AG04449 (cell line): ENCODE measurements at regions of chr1 and their contacts with region 1.

Region 1: DNA sequence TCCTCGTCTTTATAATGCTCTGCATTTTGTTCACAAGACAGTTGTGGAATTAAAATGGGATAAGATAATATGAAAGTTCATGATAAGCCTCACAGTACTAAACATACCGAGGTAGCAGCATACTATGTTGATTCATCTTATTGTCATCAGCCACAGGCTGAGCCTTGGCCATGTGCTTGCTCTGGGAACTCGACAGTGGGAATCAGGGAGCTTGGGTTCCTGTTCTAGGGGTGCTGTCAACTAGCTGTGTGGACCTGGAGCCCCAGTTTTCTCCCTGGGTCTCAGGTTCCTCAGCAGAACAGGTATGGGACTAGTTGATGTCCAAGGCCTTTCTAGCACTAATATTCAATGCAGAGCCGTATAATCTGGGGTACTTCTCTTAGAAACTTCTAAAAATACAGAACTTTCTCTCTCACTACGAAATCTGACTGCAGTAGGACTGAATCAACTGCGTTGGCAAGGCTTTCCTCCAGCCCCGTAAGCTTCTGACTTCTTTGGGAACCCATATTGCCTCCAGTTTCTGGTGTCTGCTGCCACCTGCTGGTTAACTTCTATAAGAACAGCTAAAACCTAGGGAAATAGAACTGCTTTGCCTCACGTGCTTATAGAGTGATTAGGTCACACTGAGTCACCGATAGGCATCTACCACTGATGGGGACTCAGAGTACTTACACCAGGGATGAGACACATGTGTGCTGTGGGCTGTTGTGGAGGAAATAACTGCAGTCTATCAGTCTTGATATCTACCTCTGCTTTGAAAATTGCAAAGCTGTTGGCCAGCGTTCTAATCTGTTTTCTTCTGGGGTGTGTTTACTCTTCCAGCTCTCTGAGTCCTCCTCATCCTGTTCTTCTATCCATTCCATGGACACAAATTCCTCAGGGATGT is 110.9 kb downstream of the RGL1 start:
- DNase-seq: peak; percentile 92
- H3K4me3 ChIP-seq: peak overlapping the region; percentile 32
- CTCF ChIP-seq: peak; percentile 58

Region 2: DNA sequence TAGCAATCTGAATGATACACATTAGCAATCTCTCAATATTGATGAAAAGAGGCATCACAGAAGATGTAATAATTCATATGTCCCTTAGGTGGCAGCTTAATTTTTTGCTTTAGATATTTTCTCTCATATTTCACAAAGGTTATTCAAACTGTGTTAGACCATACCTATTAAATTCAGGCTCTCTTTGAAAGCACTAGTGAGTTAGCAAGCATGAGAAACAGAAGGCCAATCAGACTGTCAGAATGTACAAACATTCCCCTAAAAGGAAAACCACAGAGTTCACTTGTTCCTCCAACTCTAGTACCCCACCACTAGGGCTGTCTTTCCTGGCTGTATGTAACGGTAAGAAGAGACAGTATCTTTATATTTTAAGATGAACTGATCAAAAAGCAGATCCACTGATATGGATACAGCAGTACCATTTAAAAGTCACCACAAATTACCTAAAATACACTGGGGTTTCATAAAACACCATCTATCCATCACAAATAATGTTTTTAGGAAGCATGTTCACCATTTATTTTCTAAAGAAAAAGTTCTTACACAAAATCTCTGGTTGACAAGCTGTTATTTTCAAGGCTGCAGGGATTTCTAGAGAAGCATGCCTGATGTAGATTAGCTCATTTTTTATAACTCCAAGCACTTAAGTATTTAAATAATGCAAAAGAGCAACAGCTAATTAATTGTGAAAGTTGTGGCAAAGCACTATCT is 282.1 kb before region 1 on chr1:
- CTCF ChIA-PET with region 1: interaction called, 18 read pairs
- POLR2A ChIA-PET with region 1: interaction called, 4 read pairs
- DNase-seq: peak; percentile 83
- H3K4me3 ChIP-seq: peak overlapping the region; percentile 84
- CTCF ChIP-seq: peak; percentile 47

Region 3: DNA sequence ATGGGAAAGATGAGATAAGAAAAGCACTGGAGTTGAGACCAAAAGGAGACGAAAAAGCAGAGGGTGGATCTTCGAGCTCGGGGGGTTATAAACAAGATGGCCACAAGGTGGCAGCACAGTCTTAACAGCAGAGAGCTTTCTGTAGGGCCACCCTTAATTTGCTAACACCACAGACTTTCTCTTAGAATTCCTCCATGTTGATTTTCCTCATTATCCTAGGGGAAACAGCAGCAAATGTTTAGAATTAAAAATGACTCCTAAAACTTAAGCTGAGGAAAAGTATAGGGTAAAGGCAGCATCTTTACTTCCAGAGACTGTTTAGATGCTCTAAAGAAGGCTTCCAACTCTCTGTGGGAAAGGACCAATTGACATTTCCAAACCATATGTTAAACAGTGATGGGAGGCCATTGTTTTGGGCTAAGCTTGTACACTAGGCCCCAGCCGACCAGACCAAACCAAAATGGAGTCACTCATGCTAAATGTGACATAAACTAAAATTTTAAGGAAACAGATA is 260.2 kb before region 1 on chr1:
- CTCF ChIA-PET with region 1: interaction called, 284 read pairs
- POLR2A ChIA-PET with region 1: interaction called, 3 read pairs
- DNase-seq: no peak
- H3K4me3 ChIP-seq: no peak overlapping the region
- CTCF ChIP-seq: peak; percentile 78

Region 4: GRCh38 chr1:183685112-183685713 is 230.7 kb before region 1 on chr1:
- CTCF ChIA-PET with region 1: interaction called, 66 read pairs
- POLR2A ChIA-PET with region 1: no interaction called
- DNase-seq: no peak
- H3K4me3 ChIP-seq: no peak overlapping the region
- CTCF ChIP-seq: peak; percentile 38

Region 5: DNA sequence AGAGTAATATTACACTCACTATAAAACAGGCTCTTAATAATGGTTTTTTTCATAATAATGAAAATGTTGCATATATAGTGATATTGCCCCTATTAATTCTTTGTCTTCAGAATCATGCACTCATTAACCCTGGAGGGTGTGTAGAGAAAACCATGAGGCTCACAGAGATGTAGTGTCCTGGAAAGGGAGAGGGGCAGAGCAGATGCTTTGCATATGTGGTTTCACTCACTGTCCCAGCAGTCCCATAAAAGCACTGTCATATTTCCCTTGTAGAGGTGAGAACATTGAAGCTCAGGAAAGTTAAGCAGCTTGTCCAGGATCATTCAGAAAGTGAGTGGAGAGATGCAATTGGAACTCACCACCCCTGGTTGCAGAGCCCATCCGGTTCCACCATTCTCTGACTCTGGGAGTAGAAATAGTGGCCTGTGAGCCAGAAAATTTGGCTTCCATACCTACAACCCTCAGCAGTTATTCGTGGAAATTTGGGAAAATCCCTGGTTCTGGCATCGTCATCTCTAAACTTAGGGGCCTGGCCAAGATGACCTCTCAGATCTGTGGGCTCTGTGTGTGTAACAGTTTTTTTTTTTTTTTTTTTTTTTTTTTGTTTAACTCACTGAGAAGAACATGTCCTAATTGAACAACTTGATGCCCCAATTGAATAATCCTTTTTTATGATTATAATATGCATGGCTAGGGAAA is 24.6 kb before region 1 on chr1:
- CTCF ChIA-PET with region 1: interaction called, 15 read pairs
- POLR2A ChIA-PET with region 1: no interaction called
- DNase-seq: no peak
- H3K4me3 ChIP-seq: no peak overlapping the region
- CTCF ChIP-seq: no peak

Region 6: GRCh38 chr1:183932412-183932811 is 16.5 kb after region 1 on chr1:
- CTCF ChIA-PET with region 1: interaction called, 27 read pairs
- POLR2A ChIA-PET with region 1: no interaction called
- DNase-seq: no peak
- H3K4me3 ChIP-seq: no peak overlapping the region
- CTCF ChIP-seq: no peak

Region 7: GRCh38 chr1:183942933-183943693 is 27.2 kb after region 1 on chr1:
- CTCF ChIA-PET with region 1: interaction called, 16 read pairs
- POLR2A ChIA-PET with region 1: no interaction called
- DNase-seq: peak; percentile 97
- H3K4me3 ChIP-seq: peak overlapping the region; percentile 26; the same call in 1 of the 2 replicates
- CTCF ChIP-seq: peak; percentile 43